Spleen (tissue), 13 donors: ENCODE measurements at regions of chr10 and their contacts with region 1.

Region 1: GRCh38 chr10:102476466-102477141 is 25.3 kb upstream of the C10orf95 start:
- DNase-seq: no peak
- H3K4me3 ChIP-seq: no peak overlapping the region
- H3K27ac ChIP-seq: peak overlapping the region in 1 of 8 donors; percentile 46
- H3K4me1 ChIP-seq: peaks cover 0 to 24% (median 4%) of the 10 kb centered on the region in 6 donors
- H3K27me3 ChIP-seq: no peaks in the 10 kb centered on the region
- CTCF ChIP-seq: no peak
- POLR2A ChIP-seq: no peak

Region 2: GRCh38 chr10:102225646-102226541 is 250.7 kb before region 1 on chr10 and contains the start of gene ELOVL3:
- intact Hi-C with region 1: loop called (anchors 10 kb)
- DNase-seq: peak; percentile 94
- H3K4me3 ChIP-seq: peak within 1 kb of the TSS in 7 of 8 donors; percentile 22 to 67 (median 40)
- H3K27ac ChIP-seq: peak within 1 kb of the TSS; percentile 11 to 80 (median 76)
- H3K4me1 ChIP-seq: peaks cover 19 to 46% (median 35%) of the 10 kb centered on the region in 6 donors
- H3K27me3 ChIP-seq: peaks cover 0 to 57% (median 17%) of the 10 kb centered on the region in 7 donors
- CTCF ChIP-seq: peak in 4 of 11 experiments; percentile 10 to 53 (median 23)
- POLR2A ChIP-seq: no peak
- total RNA-seq, gene ELOVL3: 0.26 to 2.0 (median 0.64) TPM in 5 of 7 donors, not detected in the others